ENCODE measurements at regions of chr11 and their contacts with region 1.

Region 1: DNA sequence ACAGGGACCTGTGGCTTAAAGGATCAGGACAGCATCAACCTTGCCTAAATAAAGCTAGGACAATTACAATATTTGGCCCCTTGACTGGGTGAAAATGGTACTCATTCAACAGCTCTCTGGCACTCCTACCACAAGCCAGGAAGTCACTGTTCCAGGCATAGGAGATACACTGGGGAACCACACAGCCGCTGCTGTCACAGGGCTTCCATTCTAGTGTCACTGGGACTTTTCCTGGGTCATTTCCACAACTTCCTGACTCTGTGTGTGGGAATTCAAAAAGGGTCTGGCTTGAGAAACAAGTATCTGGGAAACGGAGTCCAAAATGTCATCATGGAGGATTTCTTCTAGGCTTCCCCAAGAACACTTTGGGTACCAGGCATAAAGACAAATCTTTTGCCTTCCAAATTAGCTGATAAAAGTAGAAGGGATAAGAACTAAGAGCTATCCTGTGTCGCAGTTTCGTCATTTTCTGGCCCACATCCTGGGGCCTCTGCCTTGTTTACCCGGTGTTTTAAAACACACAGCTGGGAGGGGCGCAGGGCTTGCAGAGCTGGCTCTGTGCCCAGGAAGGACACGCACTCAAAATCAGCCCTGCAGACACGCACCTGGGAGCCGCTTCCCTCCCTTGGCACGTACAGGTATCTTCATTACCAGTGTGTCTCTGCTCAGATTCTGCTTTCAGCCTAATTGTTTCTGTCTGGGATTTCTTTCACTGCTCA is 38.0 kb downstream of the TMEM45B start:
- DNase-seq: peak; percentile 34 to 38
- H3K4me3 ChIP-seq: no peak overlapping the region
- H3K4me3 Mint-ChIP-seq: no peak overlapping the region
- H3K27ac Mint-ChIP-seq: peak overlapping the region; percentile 67
- H3K4me1 ChIP-seq: peaks cover 21% of the 10 kb centered on the region
- H3K4me1 Mint-ChIP-seq: peaks cover 55% of the 10 kb centered on the region
- H3K27me3 ChIP-seq: no peaks in the 10 kb centered on the region
- H3K27me3 Mint-ChIP-seq: no peaks in the 10 kb centered on the region
- CTCF ChIP-seq: no peak

Region 2: GRCh38 chr11:129785383-129786111 is 68.1 kb before region 1 on chr11:
- CTCF ChIA-PET with region 1: interaction called, 11 read pairs
- POLR2A ChIA-PET with region 1: no interaction called
- intact Hi-C with region 1: no loop called
- DNase-seq: peak in 1 of 2 experiments; percentile 66
- H3K4me3 ChIP-seq: no peak overlapping the region
- H3K4me3 Mint-ChIP-seq: no peak overlapping the region
- H3K27ac Mint-ChIP-seq: peak overlapping the region; percentile 4
- H3K4me1 ChIP-seq: peaks cover 18% of the 10 kb centered on the region
- H3K4me1 Mint-ChIP-seq: peaks cover 18% of the 10 kb centered on the region
- H3K27me3 ChIP-seq: no peaks in the 10 kb centered on the region
- H3K27me3 Mint-ChIP-seq: no peaks in the 10 kb centered on the region
- CTCF ChIP-seq: peak; percentile 2 to 52

Region 3: GRCh38 chr11:129910360-129910759 is 56.7 kb after region 1 on chr11:
- CTCF ChIA-PET with region 1: no interaction called
- POLR2A ChIA-PET with region 1: no interaction called
- intact Hi-C with region 1: no loop called
- DNase-seq: peak in 1 of 2 experiments; percentile 39
- H3K4me3 ChIP-seq: no peak overlapping the region
- H3K4me3 Mint-ChIP-seq: no peak overlapping the region
- H3K27ac Mint-ChIP-seq: no peak overlapping the region
- H3K4me1 ChIP-seq: peaks cover 8% of the 10 kb centered on the region
- H3K4me1 Mint-ChIP-seq: peaks cover 11% of the 10 kb centered on the region
- H3K27me3 ChIP-seq: no peaks in the 10 kb centered on the region
- H3K27me3 Mint-ChIP-seq: no peaks in the 10 kb centered on the region
- CTCF ChIP-seq: no peak

Region 4: GRCh38 chr11:130050257-130050656 is 196.6 kb after region 1 on chr11:
- CTCF ChIA-PET with region 1: no interaction called
- POLR2A ChIA-PET with region 1: no interaction called
- intact Hi-C with region 1: no loop called
- DNase-seq: no peak
- H3K4me3 ChIP-seq: no peak overlapping the region
- H3K4me3 Mint-ChIP-seq: no peak overlapping the region
- H3K27ac Mint-ChIP-seq: no peak overlapping the region
- H3K4me1 ChIP-seq: 0 out of 2 replicates have a peak, but pooled peaks cover 3% of the 10 kb centered on the region
- H3K4me1 Mint-ChIP-seq: no peaks in the 10 kb centered on the region
- H3K27me3 ChIP-seq: no peaks in the 10 kb centered on the region
- H3K27me3 Mint-ChIP-seq: no peaks in the 10 kb centered on the region
- CTCF ChIP-seq: no peak

Measured in Caco-2 (cell line).